ENCODE measurements at regions of chr14 and their contacts with region 1.

Region 1: GRCh38 chr14:99971941-99972747 is 93.1 kb upstream of the EVL start:
- DNase-seq: peak; percentile 39
- H3K4me3 ChIP-seq: peak overlapping the region; percentile 79
- H3K27ac ChIP-seq: peak overlapping the region; percentile 80
- H3K4me1 ChIP-seq: no peaks in the 10 kb centered on the region
- H3K27me3 ChIP-seq: no peaks in the 10 kb centered on the region
- CTCF ChIP-seq: no peak

Region 2: DNA sequence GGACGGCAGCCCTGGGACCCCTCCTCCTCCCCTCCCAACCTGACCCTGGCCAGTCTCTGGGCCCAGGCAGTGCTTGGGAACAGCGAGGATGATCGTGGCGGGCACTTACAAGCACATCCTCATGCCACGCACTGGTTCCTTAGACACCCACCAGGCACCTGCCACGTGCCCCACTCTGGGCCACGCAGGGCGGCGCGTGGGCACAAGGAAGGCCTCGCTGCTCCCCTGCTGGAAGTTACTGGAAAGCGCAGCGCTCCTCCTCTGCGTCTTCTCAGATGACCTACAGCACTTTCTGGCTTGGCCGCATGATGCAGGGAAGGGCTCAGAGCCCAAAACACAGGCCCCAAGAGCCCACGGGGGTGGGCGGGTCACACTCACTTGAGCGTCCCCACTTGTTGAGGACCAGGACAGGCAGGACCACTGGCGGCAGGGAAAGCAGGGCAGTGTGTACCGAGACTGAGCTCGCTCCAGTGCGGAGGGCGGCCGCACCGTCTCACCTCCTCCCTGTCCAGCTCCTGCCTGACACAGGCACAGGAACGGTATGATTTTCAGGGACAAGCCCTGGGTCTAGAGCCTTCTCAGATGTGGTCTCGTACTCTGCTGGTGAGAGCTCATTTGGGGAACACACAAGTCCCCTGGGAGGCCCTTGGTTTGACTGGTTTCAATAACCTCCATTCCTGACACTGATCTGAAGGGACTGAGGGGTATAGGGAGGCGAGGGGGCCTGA is 35.2 kb before region 1 on chr14:
- CTCF ChIA-PET with region 1: no interaction called
- POLR2A ChIA-PET with region 1: no interaction called
- intact Hi-C with region 1: loop called (anchors 2 kb)
- DNase-seq: no peak
- H3K4me3 ChIP-seq: no peak overlapping the region
- H3K27ac ChIP-seq: no peak overlapping the region
- H3K4me1 ChIP-seq: no peaks in the 10 kb centered on the region
- H3K27me3 ChIP-seq: no peaks in the 10 kb centered on the region
- CTCF ChIP-seq: 0 out of 2 replicates have a peak, but pooled peaks have one; percentile 13

Region 3: GRCh38 chr14:100122481-100123222 is 150.5 kb after region 1 on chr14:
- CTCF ChIA-PET with region 1: no interaction called
- POLR2A ChIA-PET with region 1: no interaction called
- intact Hi-C with region 1: no loop called
- DNase-seq: no peak
- H3K4me3 ChIP-seq: no peak overlapping the region
- H3K27ac ChIP-seq: no peak overlapping the region
- H3K4me1 ChIP-seq: no peaks in the 10 kb centered on the region
- H3K27me3 ChIP-seq: no peaks in the 10 kb centered on the region
- CTCF ChIP-seq: no peak

Measured in A673 (cell line).